Posterior vena cava (tissue), 2 donors: ENCODE measurements at regions of chr10 and their contacts with region 1.

Region 1: DNA sequence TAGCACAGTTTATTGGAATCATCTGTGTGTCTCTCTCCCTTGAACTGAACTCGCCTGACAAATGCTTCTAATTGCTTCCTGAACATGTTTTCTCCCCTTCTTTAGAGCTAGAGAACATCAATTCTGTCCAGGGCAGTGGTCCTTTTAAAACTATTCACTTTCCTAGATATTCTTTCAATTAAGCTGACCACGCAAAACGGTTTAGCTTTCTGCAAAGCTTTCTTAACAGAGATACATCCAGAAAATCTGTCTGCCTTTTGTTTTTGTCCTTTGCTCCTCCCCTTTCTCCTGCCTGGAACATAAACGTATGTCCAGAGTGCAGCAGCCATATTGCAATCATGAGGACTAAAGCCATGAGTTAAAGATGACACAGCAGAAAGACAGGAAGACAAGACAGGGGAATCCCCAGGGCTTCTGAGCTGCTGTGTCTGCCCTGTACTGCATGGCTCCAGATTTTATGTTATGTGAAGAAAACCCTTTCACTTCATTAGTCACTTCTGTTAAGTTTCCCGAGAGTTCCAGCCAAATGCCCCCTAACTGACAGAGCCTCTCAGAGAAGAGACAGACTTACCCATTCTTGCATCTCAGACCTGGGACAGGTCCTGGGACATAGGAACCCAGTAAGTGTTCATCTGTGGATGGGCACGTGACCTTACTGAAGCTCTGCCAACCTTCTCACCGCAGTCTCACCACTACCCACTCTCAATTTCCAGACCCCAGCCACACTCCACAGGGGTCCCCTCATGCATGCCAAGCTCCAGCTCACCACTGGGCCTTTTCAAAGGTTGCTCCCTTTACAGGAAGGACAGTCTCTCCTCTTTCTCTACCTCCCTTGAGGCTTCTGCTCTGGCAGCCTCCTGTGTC is 35.0 kb upstream of the CPXM2 start:
- DNase-seq: peak; percentile 35

Region 2: GRCh38 chr10:122639801-122640200 is 1286.8 kb before region 1 on chr10:
- intact Hi-C with region 1: loop called in 1 of 2 experiments (anchors 5 kb)
- DNase-seq: no peak

Region 3: DNA sequence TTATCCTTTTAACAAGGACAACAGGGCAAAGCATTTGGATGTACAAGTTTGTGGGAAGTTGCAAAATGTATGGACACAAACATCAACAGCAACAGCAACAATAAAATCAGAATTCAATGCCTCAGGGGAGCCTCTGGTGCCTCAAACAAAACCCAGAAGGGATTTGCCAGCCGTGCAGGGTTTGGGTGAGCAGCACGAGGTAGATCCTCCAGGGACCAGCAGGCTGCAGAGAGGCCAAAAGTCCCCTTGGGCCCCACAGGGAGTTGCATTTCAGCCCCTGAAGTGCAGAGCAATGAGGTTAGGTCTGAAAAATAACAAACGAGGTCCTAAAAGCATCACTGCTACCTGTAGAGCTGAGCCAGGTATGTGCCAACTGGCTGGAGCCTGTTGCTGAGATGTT is 16.7 kb after region 1 on chr10:
- intact Hi-C with region 1: loop called in 1 of 2 experiments (anchors 1 kb)
- DNase-seq: no peak

Region 4: DNA sequence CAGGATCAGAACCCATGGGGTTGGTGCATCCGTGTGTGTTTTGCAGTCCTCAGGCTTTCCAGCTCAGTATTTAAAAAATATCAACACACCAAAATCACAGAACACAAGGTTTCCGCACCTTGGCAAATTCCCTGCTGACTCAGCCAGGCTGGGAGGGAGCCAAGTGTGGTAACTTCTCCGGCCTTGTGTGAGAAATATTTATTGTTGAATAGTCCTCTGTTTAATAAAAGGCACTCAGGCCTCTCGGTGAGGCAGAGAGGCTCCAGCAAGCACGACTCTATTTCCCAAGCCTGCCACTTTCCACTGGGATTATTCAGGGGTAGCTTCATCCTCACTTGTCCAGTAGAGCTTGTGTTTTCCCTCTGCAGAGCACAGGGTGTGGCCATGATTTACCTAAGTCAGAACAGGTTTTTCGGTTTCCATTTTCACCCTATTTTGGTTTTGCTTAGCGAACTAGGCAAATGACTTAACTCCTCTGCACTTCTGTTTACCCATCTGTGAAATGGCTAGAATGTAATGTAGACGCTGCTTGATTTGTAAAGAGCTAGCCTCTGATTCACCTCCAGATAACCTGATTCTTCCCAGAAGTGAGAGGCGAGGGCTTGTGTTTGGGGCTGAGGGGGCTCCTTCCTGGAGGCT is 179.7 kb after region 1 on chr10:
- intact Hi-C with region 1: no loop called
- DNase-seq: peak; percentile 89

Region 5: DNA sequence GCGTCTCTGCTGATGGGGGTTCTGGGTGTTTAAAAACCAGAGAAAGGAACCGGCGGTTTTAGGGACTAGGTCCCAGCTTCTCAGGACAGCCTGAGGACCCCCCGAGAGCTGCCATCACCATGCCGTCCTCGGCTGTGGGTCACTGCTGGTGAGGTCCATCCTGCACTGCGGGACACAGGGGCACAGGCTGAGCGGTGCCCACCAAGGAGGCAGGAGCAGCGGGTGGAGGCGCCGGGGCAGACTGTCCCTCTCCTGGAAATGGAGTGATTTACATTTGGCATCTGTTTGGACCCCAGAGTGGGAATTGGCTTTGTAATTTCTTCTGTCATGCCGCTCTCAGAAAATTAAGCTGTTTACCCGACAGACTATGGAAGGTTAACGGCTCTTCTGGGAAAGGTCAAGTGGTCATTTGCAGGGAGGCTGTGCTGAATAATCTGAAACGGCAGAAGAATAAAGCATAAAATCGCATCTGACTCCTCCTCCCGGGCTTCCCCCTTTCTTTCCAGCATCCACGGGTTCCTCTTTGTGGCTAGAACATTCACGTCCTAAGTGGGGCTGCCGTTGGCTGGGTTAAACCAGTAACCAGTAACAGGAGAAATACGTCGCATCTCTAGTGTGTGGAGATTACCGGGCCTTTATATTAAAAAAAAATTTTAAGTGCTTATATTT is 566.7 kb after region 1 on chr10:
- intact Hi-C with region 1: no loop called
- DNase-seq: peak; percentile 72

Region 6: GRCh38 chr10:124703778-124704427 is 777.3 kb after region 1 on chr10:
- intact Hi-C with region 1: no loop called
- DNase-seq: peak; percentile 89